Ascending aorta (tissue), 2 donors: ENCODE measurements at regions of chr15 and their contacts with region 1.

Region 1: GRCh38 chr15:63600616-63601025 is 3.4 kb downstream of the FBXL22 start:
- DNase-seq: peak; percentile 44 to 93
- H3K4me3 ChIP-seq: peak overlapping the region; percentile 80 to 86
- H3K27ac ChIP-seq: peak overlapping the region; percentile 82 to 86
- H3K4me1 ChIP-seq: peaks cover 5 to 34% of the 10 kb centered on the region in 2 donors
- H3K27me3 ChIP-seq: no peaks in the 10 kb centered on the region
- CTCF ChIP-seq: no peak

Region 2: GRCh38 chr15:62799919-62800318 is 800.7 kb before region 1 on chr15:
- intact Hi-C with region 1: no loop called
- DNase-seq: no peak
- H3K4me3 ChIP-seq: no peak overlapping the region
- H3K27ac ChIP-seq: no peak overlapping the region
- H3K4me1 ChIP-seq: no peaks in the 10 kb centered on the region
- H3K27me3 ChIP-seq: no peaks in the 10 kb centered on the region
- CTCF ChIP-seq: no peak

Region 3: DNA sequence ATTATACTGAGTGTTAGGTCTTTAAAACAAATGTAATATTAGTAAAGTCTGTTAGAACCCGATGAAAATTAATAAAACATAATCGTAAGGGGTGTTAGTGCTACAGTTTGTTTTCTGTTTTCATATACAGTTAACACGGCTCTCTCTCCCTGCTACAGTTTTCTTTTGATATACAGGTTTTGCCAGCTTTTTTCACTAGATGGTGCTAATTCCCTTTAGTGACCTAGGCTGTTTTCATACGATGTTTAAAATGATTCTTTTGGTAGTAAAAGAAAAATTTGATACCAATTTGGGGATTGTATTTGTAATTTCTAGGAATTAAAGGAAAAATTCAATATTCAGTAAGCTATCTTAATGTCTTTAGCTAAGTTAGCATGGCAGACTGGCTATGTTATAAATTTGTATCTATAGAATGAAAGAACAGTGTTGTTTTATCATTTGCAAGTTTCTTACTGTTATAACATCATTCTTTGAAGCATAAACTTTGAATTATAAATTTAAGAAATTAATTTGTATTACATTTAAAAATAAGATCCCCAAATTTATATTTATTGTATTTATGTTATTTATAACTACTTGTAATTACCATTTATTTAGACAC is 311.7 kb before region 1 on chr15:
- intact Hi-C with region 1: loop called (anchors 5 kb)
- DNase-seq: no peak
- H3K4me3 ChIP-seq: no peak overlapping the region
- H3K27ac ChIP-seq: no peak overlapping the region
- H3K4me1 ChIP-seq: peaks cover 5 to 17% of the 10 kb centered on the region in 2 donors
- H3K27me3 ChIP-seq: no peaks in the 10 kb centered on the region
- CTCF ChIP-seq: peak; percentile 56 to 74 (median 65)

Region 4: DNA sequence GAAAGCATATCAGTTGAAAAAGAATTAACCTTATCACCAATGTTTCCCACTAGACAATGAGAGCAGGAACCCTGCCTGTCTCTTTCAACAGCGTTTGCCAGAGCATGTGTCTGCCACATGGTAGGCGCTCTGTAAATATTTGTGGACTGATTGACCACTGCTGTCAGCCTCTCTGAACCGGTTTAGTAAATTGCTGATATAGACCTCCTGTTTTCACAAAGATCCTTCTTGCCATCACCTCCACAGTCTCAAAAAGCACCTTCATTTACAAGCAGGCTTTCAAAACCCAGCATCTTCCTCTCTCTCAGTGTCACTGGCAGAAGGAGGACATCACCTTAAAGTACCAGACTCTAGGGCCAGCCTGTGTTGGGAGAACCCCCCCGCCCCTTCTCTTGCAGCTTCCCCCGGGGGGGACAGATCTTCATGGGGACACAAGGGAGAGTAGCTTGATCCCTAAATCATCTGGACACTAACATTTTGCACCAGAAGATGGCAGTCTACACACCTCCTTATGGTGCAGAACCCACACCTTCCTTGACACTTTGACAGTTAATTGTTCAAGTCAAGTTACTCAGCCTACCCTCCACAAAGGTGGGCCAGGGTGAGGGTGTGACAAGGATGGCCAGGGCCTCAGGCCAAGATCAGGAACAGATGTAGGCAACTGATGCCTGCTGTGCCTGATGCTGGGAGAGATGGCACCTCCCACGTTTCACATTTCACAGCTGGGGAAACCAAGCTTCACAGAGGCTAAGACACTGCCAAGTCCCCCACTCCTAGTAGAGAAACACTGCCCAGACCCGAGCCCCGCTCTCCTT is 134.0 kb before region 1 on chr15:
- intact Hi-C with region 1: loop called (anchors 1 kb)
- DNase-seq: peak in 1 of 2 donors; percentile 58
- H3K4me3 ChIP-seq: no peak overlapping the region
- H3K27ac ChIP-seq: no peak overlapping the region
- H3K4me1 ChIP-seq: peaks cover 0 to 5% of the 10 kb centered on the region in 2 donors
- H3K27me3 ChIP-seq: no peaks in the 10 kb centered on the region
- CTCF ChIP-seq: peak; percentile 45 to 65 (median 47)

Region 5: GRCh38 chr15:63487076-63487757 is 113.4 kb before region 1 on chr15:
- intact Hi-C with region 1: loop called (anchors 5 kb)
- DNase-seq: peak; percentile 45 to 94
- H3K4me3 ChIP-seq: no peak overlapping the region
- H3K27ac ChIP-seq: no peak overlapping the region
- H3K4me1 ChIP-seq: no peaks in the 10 kb centered on the region
- H3K27me3 ChIP-seq: no peaks in the 10 kb centered on the region
- CTCF ChIP-seq: peak; percentile 88 to 95 (median 90)

Region 6: DNA sequence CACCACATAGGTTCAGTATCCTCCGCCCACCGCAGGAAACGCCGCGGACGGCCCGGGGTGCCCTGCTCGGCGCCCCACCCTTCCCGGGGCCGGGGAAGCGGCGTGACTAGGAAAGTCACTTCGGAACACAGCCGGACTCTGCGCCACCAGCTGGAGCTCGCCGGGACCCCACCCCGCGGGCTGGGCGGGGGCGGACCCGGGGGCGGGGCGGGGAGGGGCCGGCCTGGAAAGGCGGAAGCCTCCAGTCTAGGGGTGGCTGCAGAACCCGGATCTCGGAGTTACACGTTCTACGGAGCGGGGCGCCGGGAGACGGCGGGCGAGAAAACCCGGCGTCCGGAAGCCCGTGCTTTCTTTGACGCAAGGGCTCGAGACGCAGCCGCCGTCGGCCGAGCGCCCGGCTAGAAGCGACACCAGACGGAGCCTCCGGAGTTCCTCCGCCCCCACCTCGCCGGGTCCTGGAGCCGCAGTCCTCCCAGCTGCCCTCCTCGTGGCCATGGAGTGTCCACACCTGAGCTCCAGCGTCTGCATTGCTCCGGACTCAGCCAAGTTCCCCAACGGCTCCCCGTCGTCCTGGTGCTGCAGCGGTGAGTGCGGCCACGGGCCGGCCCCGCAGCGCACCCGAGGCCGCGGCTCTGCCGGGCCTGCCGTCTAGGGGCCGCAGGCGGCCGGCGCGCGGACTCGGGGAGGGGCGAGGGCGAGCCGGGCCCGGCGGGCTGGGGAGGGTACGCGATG is 96.2 kb before region 1 on chr15 and contains the start of gene USP3:
- intact Hi-C with region 1: loop called (anchors 1 kb)
- DNase-seq: peak; percentile 86 to 98
- H3K4me3 ChIP-seq: peak within 1 kb of the TSS; percentile 93 to 94
- H3K27ac ChIP-seq: peak within 1 kb of the TSS; percentile 98 to 99
- H3K4me1 ChIP-seq: peaks cover 6 to 55% of the 10 kb centered on the region in 2 donors
- H3K27me3 ChIP-seq: no peaks in the 10 kb centered on the region
- CTCF ChIP-seq: peak; percentile 56 to 63 (median 60)
- total RNA-seq, gene USP3: 61.9 TPM

Region 7: GRCh38 chr15:63553388-63553791 is 47.2 kb before region 1 on chr15:
- intact Hi-C with region 1: loop called (anchors 5 kb)
- DNase-seq: no peak
- H3K4me3 ChIP-seq: peak overlapping the region in 1 of 2 donors; percentile 19
- H3K27ac ChIP-seq: peak overlapping the region; percentile 37 to 42
- H3K4me1 ChIP-seq: peaks cover 0 to 11% of the 10 kb centered on the region in 2 donors
- H3K27me3 ChIP-seq: no peaks in the 10 kb centered on the region
- CTCF ChIP-seq: no peak

Region 8: DNA sequence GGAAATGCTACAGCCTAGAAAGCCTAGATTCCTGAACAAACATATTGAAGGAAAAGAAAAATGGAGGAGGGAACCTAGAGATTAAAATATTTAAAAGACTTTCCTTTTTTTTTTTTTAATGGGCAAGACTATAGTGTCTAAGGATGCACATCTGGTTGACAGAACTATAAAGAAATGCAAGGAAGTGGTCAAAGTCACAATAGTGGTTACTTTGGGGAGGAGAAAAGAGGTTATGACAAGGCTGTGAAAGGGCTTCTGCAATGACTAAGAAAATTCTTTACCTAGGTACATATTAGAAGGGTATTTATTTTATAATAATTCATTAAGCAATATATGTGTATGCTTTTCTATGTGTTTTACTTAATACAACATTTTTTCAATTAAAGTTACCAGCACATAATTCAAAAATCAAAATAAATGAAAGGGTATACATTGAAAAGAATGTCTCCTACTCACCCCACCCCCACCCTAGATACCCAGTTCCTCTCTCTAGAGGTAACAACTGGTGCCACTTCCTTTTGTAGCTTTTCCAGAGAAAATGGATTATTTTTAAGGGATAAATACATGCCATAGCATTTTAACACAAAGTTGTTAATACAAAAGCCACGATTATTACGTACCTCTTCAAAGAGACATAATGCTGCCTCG is 163.0 kb after region 1 on chr15:
- intact Hi-C with region 1: no loop called
- DNase-seq: no peak
- H3K4me3 ChIP-seq: no peak overlapping the region
- H3K27ac ChIP-seq: no peak overlapping the region
- H3K4me1 ChIP-seq: no peaks in the 10 kb centered on the region
- H3K27me3 ChIP-seq: no peaks in the 10 kb centered on the region
- CTCF ChIP-seq: no peak

Region 9: GRCh38 chr15:64093627-64094417 is 493.2 kb after region 1 on chr15 and contains the start of gene CIAO2A:
- intact Hi-C with region 1: loop called (anchors 10 kb)
- DNase-seq: peak; percentile 91 to 98
- H3K4me3 ChIP-seq: peak within 1 kb of the TSS; percentile 59 to 79
- H3K27ac ChIP-seq: peak within 1 kb of the TSS; percentile 79 to 89
- H3K4me1 ChIP-seq: peaks cover 13 to 32% of the 10 kb centered on the region in 2 donors
- H3K27me3 ChIP-seq: no peaks in the 10 kb centered on the region
- CTCF ChIP-seq: no peak
- total RNA-seq, gene CIAO2A: 2.4 TPM